A549 (cell line): ENCODE measurements at regions of chr16 and their contacts with region 1.

Region 1: DNA sequence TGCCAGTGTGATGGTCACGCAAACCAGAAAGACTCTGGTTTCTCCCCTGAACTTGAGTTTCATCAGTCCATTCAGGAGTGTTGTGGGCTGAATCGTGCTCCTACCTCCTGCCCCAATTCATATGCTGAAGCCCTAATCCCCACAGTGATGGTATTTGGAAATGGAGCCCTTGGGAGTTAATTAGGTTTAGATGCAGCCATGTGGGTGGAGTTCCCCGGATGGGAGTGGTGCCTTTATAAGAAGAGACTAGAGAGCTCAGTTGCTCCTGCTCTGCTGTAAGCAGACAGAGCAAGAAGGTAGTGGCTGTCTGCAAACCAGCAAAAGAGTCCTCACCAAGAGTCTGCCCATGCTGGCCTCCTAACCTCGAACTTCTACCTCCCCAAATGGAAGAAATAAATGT is 160.3 kb upstream of the DYNLRB2 start:
- DNase-seq: no peak
- ATAC-seq: no peak
- H3K4me3 ChIP-seq: no peak overlapping the region
- H3K27ac ChIP-seq: no peak overlapping the region
- H3K4me1 ChIP-seq: no peaks in the 10 kb centered on the region
- CTCF ChIP-seq: no peak
- EP300 ChIP-seq: no peak
- POLR2A ChIP-seq: no peak
- RAD21 ChIP-seq: no peak

Region 2: GRCh38 chr16:80369138-80369958 is 11.2 kb before region 1 on chr16:
- CTCF ChIA-PET with region 1: interaction called, 15 read pairs
- POLR2A ChIA-PET with region 1: no interaction called
- DNase-seq: peak; percentile 31 to 59
- ATAC-seq: peak; percentile 91 to 96
- H3K4me3 ChIP-seq: no peak overlapping the region
- H3K27ac ChIP-seq: no peak overlapping the region
- H3K4me1 ChIP-seq: no peaks in the 10 kb centered on the region
- CTCF ChIP-seq: peak; percentile 63
- EP300 ChIP-seq: no peak
- POLR2A ChIP-seq: no peak
- RAD21 ChIP-seq: peak; percentile 90 to 91